ENCODE measurements at regions of chr17 and their contacts with region 1.

Region 1: DNA sequence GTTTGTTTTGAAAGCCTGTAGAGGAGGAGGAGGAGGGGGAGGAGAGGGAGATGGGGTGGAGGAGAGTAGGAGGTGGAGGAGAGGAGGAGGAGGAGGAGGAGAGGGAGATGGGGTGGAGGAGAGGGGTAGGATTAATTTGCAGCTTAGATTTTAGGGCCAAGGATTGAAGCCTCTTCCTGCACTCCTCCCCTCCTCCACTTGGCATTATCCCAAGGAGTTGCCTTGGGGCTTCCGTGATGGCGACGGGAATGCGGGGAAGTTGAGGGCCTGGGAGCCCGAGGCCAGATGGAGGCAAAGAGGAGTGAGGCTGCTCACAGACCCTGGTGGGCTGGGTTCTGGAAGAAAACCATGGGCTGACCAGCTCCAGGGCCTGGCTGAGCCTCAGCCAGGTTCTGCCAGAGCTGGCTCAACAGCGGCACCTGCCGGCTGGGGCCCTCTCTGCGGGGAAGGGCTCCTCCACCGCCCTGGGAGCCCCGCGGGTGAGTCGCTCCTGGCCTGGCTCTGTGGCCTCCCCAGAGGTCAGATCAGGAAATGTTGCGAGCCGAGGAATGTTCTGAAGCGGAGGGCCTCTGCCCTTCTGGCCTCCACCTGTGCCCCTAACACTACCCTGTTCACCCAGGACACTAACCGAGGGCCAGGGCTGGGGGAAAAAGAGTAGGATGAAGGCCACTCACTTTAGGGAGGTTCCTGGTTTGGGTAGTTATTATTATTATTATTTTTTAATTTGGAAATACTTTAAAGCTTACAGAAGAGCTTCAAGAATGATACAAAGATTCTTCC is 23.9 kb upstream of the FMNL1 start:
- DNase-seq: peak; percentile 91
- ATAC-seq: peak; percentile 100
- H3K4me3 Mint-ChIP-seq: no peak overlapping the region
- H3K27ac Mint-ChIP-seq: no peak overlapping the region
- H3K4me1 Mint-ChIP-seq: peaks cover 4% of the 10 kb centered on the region
- H3K27me3 Mint-ChIP-seq: no peaks in the 10 kb centered on the region
- CTCF ChIP-seq: no peak

Region 2: DNA sequence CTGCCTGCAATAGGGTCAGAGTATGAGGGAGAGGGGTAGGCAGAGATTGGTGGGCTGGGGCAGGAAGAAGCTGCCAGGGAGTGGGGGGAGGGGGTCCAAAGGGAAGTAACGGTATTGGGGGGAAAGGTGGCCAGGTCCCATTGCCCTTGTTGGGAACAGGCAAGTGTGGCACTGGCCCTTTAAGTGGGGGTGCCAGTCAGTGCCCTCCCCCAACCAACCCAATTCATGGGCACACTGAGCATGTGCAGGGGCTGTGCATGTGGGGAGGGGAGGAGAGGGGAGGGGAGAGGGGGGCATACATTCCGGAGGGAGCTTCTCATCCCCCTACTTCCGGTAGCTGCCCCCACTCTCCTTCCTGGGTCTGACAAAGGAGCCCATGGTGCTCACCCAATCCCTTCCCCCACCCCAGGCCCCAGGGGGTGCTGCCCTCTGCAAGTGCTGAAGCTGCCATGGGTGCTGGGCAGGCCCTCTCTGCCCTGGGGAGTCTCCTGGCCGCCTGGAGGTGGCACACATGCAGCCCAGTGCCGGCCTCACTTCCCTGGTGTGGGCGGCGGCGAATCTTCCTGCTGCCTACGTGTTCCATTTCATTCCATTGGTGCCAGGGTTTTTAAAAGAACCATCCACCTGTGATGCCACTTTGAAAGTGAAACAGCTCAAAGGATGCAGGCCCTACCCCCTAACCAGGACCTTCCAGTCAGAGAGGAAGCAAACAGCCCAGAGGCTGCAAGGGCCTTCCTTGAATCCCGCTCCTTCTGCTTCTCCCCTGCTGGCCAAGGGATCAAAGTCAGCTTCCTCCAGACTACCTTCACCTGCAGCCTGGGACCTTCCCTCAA is 25.1 kb before region 1 on chr17:
- CTCF ChIA-PET with region 1: interaction called, 21 read pairs
- POLR2A ChIA-PET with region 1: interaction called, 3 read pairs
- intact Hi-C with region 1: no loop called
- DNase-seq: peak; percentile 52
- ATAC-seq: peak; percentile 91
- H3K4me3 Mint-ChIP-seq: peak overlapping the region; percentile 80
- H3K27ac Mint-ChIP-seq: peak overlapping the region; percentile 93
- H3K4me1 Mint-ChIP-seq: peaks cover 14% of the 10 kb centered on the region
- H3K27me3 Mint-ChIP-seq: no peaks in the 10 kb centered on the region
- CTCF ChIP-seq: no peak

Measured in activated B cell treated with CpG ODN at 0.5 μM for 24 hours (primary cell).